ENCODE measurements at regions of chr6 and their contacts with region 1.

Region 1: GRCh38 chr6:118869894-118870589 is 23.9 kb upstream of the ASF1A start:
- DNase-seq: no peak
- ATAC-seq: no peak
- H3K4me3 ChIP-seq: no peak overlapping the region
- H3K27ac ChIP-seq: no peak overlapping the region
- H3K4me1 ChIP-seq: peaks cover 0 to 14% (median 2%) of the 10 kb centered on the region in 12 donors
- H3K27me3 ChIP-seq: no peaks in the 10 kb centered on the region
- CTCF ChIP-seq: no peak
- POLR2A ChIP-seq: no peak

Region 2: DNA sequence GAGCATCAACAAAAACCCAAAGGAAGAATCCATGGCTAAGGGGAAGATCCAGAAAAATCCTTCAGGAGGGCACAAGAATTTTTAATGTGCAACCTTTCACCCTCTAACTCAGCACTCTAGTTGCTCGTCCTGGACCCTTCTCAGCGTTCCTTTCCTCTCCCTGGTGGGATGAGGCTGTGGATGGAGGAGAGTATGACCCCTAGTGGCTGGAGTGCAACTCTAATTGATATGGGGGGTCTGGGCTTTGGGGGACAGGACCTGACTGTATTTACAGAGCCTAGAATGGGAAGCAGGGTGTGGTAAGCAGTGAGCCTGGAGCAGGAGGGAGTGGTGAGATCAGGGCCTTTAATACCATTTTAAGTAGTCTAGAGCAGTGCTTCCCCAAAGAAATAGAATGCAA is 134.7 kb before region 1 on chr6:
- intact Hi-C with region 1: no loop called
- DNase-seq: no peak
- ATAC-seq: no peak
- H3K4me3 ChIP-seq: no peak overlapping the region
- H3K27ac ChIP-seq: no peak overlapping the region
- H3K4me1 ChIP-seq: peaks cover 0 to 7% (median under 1%) of the 10 kb centered on the region in 12 donors
- H3K27me3 ChIP-seq: no peaks in the 10 kb centered on the region
- CTCF ChIP-seq: peak in 9 of 12 donors; percentile 11 to 48 (median 37)
- POLR2A ChIP-seq: no peak

Region 3: DNA sequence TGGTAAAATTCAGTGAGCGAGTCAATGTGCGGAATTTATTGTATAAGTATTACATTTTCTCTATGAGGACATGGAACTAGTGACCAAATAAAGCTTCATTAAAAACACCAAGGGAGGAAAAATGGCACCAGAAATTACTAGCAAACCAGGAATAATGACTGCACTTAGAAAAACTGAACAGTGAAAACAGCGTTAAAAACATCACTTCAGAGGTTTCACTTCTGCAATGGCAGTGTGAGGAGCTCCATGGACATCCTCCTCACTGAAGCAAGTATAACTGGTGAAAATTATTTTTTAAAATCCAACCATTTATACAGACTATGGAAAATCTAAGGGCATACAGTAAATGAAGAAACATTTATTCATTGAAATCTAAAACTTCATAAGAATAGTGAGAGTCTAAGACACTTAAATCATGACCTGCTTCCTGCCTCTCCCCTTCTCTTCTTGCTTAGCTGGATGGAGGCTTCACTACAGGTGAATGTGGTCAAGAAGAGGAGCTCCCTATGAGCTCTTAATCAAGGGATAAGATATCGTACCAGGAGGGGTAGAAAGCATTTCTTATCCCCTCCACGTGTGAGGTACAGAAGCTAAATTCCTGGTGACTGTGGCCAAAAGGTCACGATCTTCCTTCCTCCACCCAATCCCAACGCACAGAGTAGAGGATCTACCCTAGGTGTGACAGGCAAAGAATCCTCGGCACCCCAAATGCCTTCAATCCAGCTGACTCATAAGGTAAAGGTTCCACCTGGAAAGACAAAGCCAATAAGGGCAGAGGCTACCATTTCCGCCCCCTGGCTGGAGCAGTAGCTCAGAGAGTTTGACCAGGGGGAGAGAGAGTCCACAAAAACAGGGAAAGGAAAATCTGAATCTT is 11.6 kb after region 1 on chr6:
- intact Hi-C with region 1: loop called in 1 of 10 experiments (anchors 1 kb)
- DNase-seq: no peak
- ATAC-seq: no peak
- H3K4me3 ChIP-seq: peak overlapping the region in 4 of 12 donors; percentile 6 to 27 (median 16)
- H3K27ac ChIP-seq: peak overlapping the region in 3 of 12 donors; percentile 0 to 28 (median 21)
- H3K4me1 ChIP-seq: peaks cover 0 to 22% (median 6%) of the 10 kb centered on the region in 12 donors
- H3K27me3 ChIP-seq: no peaks in the 10 kb centered on the region
- CTCF ChIP-seq: no peak
- POLR2A ChIP-seq: no peak

Measured in heart left ventricle (tissue), 16 donors.